AG04450 (cell line): ENCODE measurements at regions of chr19 and their contacts with region 1.

Region 1: DNA sequence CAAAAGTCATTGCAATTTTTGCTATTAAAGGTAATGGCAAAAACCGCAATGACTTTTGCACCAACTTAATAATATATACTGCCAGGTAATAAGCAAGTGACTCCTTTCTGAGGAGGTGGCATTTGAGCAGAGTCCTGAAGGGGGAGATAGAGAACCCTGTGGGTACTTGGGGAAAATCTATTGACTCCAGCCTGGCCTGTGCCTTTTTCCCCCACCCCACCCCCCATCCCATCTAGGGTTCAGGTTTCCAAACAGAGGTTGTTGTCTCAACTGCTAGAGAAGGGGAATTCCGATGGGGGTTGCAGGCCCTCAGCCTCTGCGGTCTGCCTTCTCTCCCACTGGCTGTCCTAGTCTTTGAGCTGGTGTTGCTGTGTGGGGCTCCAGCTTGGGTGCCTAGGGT is 11.5 kb downstream of the S1PR2 start:
- DNase-seq: peak; percentile 79
- H3K4me3 ChIP-seq: no peak overlapping the region
- H3K27ac ChIP-seq: peak overlapping the region; percentile 22
- H3K27me3 ChIP-seq: no peaks in the 10 kb centered on the region
- CTCF ChIP-seq: peak; percentile 76

Region 2: GRCh38 chr19:9903336-9903735 is 316.3 kb before region 1 on chr19:
- CTCF ChIA-PET with region 1: interaction called, 10 read pairs
- POLR2A ChIA-PET with region 1: no interaction called
- DNase-seq: no peak
- H3K4me3 ChIP-seq: no peak overlapping the region
- H3K27ac ChIP-seq: no peak overlapping the region
- H3K27me3 ChIP-seq: peaks cover 11% of the 10 kb centered on the region
- CTCF ChIP-seq: no peak

Region 3: GRCh38 chr19:10424011-10424637 is 204.4 kb after region 1 on chr19:
- CTCF ChIA-PET with region 1: no interaction called
- POLR2A ChIA-PET with region 1: no interaction called
- DNase-seq: no peak
- H3K4me3 ChIP-seq: peak overlapping the region; percentile 58
- H3K27ac ChIP-seq: no peak overlapping the region
- H3K27me3 ChIP-seq: peaks cover 7% of the 10 kb centered on the region
- CTCF ChIP-seq: peak; percentile 82